Gastrocnemius medialis (tissue), 4 donors: ENCODE measurements at regions of chr1 and their contacts with region 1.

Region 1: DNA sequence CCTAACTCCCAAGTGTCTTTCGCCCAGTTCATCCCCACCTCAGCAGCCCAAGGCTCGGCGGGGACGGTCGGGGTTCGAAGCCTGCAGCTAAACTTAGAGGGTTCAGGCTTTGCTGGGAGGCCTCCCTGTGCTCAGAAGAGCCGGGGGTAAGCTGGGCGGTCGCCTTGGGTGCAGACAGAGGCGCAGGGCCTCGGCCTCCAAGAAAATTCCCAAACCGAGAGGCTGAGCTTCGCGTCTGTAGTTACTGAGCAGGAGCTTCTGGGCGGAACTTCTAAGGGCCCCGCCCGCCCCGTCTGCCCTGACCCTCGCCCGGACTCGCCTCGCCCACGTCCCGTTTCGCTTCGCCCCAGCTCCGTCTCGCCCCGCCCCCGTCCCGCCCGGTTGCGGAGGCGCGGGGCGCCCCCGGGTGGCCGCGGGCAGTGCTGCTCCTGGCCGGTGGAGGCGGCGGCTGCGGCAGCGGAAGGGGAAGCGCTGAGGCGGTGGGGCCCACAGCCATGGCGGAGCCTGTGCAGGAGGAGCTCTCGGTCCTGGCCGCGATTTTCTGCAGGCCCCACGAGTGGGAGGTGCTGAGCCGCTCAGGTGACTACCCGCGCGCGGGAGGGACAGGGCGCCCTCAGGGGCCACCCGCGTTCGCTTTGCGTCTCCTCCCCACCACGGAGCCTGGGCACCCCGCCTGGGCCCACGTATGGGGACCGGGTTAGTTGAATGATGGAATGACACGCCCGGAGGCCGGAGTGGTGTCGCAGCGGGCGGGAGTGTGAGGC is at the start of gene RWDD3:
- DNase-seq: peak; percentile 84 to 89
- ATAC-seq: peak; percentile 89 to 93
- H3K4me3 ChIP-seq: peak within 1 kb of the TSS; percentile 75 to 99 (median 93)
- H3K27ac ChIP-seq: peak within 1 kb of the TSS; percentile 75 to 91 (median 86)
- H3K4me1 ChIP-seq: peaks cover 22 to 42% of the 10 kb centered on the region in 2 donors
- H3K27me3 ChIP-seq: no peaks in the 10 kb centered on the region
- CTCF ChIP-seq: peak; percentile 74 to 96 (median 91)
- POLR2A ChIP-seq: peak; percentile 34 to 38
- total RNA-seq, gene RWDD3: 3.2 to 12.7 (median 6.6) TPM

Region 2: DNA sequence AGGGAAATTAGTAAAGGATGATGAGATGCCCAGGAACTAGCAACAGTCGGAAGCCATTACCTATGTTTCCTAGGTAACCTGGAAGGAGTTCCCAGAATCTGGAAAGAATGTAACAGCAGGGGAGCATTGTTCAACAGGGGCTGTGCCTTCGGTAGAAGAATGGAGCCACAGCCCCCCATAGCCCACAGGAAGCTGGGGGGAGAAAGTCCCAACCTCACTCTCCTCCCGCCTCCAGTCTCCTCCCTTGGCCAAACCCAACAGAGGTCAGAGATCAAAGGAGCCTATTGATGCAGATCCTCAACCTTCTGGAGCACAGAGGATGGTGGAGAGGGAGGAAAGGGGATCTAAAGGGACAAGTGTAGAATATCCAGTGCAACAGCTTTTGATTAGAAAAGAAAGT is 545.3 kb before region 1 on chr1:
- in situ Hi-C with region 1: no loop called
- intact Hi-C with region 1: no loop called
- DNase-seq: no peak
- ATAC-seq: no peak
- H3K4me3 ChIP-seq: no peak overlapping the region
- H3K27ac ChIP-seq: peak overlapping the region; percentile 51 to 67 (median 64)
- H3K4me1 ChIP-seq: peaks cover 0 to 6% of the 10 kb centered on the region in 2 donors
- H3K27me3 ChIP-seq: peaks cover 0 to 3% (median 0%) of the 10 kb centered on the region in 3 donors
- CTCF ChIP-seq: no peak
- POLR2A ChIP-seq: no peak

Region 3: DNA sequence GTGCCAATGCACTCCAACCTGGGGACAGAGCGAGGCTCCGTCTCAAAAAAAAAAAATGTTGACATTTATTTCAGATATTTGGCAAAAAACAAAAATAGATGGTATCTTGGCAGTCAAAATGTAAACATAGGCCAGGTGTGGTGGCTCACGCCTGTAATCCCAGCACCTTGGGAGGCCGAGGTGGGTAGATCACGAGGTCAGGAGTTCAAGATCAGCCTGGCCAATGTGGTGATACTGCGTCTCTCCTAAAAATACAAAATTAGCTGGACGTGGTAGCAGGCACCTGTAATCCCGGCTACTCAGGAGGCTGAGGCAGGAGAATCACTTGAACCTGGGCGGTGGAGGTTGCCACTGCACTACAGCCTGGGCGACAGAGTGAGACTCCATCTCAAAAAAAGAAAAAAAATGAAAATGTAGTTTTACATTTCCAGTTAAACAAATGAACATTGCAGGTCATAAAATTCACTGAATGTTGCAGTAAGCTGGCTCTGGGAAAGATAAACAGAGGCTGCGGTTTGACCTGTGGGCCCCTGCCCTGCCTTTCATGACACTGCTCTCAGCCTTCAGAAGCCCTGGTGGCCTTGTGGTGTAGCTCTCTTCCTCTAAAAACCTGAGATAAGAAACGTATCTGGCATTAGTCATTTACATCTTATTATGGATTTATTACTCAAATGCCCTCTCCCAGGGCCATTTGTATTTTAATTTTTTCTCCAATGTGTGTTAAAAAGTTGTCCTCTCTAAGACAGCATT is 426.0 kb before region 1 on chr1:
- in situ Hi-C with region 1: no loop called
- intact Hi-C with region 1: no loop called
- DNase-seq: no peak
- ATAC-seq: no peak
- H3K4me3 ChIP-seq: no peak overlapping the region
- H3K27ac ChIP-seq: no peak overlapping the region
- H3K4me1 ChIP-seq: no peaks in the 10 kb centered on the region
- H3K27me3 ChIP-seq: no peaks in the 10 kb centered on the region
- CTCF ChIP-seq: no peak
- POLR2A ChIP-seq: no peak

Region 4: GRCh38 chr1:94854458-94855306 is 379.2 kb before region 1 on chr1:
- in situ Hi-C with region 1: loop called in 3 of 4 experiments (anchors 25 kb)
- intact Hi-C with region 1: loop called (anchors 5 kb)
- DNase-seq: peak; percentile 66 to 76
- ATAC-seq: peak; percentile 93 to 97
- H3K4me3 ChIP-seq: peak overlapping the region; percentile 49 to 67 (median 52)
- H3K27ac ChIP-seq: peak overlapping the region; percentile 39 to 67 (median 47)
- H3K4me1 ChIP-seq: peaks cover 0 to 9% of the 10 kb centered on the region in 2 donors
- H3K27me3 ChIP-seq: no peaks in the 10 kb centered on the region
- CTCF ChIP-seq: peak; percentile 80 to 89 (median 82)
- POLR2A ChIP-seq: no peak

Region 5: DNA sequence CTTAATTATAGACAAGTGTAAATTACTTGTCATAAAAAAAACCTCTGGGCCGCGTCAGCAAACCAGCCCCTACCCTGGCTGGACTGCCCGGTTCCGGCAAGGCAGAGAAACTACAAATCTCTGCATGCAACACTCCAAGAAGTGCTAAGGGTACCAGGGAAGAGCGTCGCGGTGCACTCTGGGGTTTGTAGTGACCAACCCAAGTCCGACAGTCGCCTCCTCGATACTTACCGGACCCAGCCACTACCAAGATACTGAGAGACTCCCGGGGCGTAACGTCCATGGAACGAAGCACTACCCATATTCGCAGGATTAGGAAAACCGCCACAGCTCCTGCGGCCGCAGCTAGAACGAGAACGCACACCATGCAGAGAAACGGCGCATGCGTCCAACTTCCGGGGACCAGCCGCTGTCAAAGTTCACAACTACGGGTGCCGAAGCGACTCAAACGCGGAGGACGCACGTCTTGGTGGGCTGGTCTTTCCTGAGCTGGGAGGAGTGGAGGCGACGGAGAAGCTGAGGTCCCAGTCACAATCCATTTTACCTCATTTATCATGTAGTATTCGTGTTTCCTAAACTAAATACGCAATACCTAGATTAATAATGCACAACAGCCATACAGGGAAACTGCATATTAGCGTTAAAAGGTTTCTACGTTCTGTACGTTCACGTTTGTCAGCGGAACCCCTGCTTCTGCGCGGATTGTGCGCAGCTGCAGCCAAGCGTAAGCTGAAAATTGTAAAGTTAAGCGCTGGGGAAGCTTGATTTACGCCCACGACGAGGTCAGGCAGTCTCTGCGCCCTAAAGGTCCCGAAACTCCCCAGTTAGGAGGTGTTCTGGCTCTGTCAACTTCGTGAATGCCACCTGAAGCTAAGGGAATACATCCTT is 161.1 kb before region 1 on chr1 and contains the start of gene ALG14:
- in situ Hi-C with region 1: no loop called
- intact Hi-C with region 1: loop called (anchors 1 kb)
- DNase-seq: peak; percentile 91 to 92
- ATAC-seq: peak; percentile 99 to 100
- H3K4me3 ChIP-seq: peak within 1 kb of the TSS; percentile 73 to 83 (median 81)
- H3K27ac ChIP-seq: peak within 1 kb of the TSS; percentile 88 to 97 (median 91)
- H3K4me1 ChIP-seq: peaks cover 5 to 7% of the 10 kb centered on the region in 2 donors
- H3K27me3 ChIP-seq: no peaks in the 10 kb centered on the region
- CTCF ChIP-seq: no peak
- POLR2A ChIP-seq: peak; percentile 53 to 71
- total RNA-seq, gene ALG14: 0.24 to 0.97 (median 0.77) TPM

Region 6: DNA sequence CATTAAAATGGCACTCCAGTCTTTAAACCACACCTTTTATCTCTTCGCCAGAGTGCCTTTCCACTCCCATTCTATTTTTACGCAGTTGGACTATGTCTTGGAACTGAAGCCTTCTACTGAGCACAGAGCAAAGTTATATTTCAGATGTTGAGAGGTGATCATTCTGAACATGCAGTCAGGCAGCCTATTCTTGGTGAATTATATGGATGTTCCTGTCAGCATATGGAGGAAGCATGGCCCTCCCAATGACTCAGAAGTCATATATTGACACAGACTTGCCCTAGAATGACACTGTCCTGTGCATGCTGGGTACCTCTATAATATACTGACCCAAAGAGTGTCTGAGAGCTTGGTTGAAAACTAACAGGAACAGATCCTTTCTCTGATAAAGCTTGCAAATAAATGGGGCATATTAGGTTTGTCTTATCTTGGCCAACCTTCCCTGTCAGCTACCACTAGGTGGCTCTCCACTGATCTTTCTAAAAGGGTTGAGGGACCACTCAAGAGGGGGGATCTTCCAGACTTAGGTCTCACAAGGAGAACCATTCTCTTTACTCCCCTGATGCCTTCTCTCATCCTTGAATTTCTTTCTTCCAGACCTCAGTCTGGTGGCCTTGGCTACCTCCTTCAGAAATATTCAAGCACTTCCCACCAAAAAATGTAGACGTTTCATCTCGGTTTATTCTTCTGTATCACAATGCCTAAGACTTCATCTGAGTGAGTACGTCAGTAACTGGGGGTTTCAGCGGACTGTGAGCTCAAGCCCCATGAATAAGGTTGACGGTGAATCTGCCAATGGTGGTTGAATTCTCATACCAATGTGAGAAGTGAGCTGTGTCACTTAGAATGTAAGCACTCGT is 149.4 kb before region 1 on chr1:
- in situ Hi-C with region 1: loop called (anchors 5 to 10 kb)
- intact Hi-C with region 1: loop called (anchors 1 kb)
- DNase-seq: peak in 1 of 2 donors; percentile 18
- ATAC-seq: peak in 1 of 2 donors; percentile 63
- H3K4me3 ChIP-seq: no peak overlapping the region
- H3K27ac ChIP-seq: no peak overlapping the region
- H3K4me1 ChIP-seq: peaks cover 0 to 13% of the 10 kb centered on the region in 2 donors
- H3K27me3 ChIP-seq: no peaks in the 10 kb centered on the region
- CTCF ChIP-seq: peak; percentile 23 to 64 (median 57)
- POLR2A ChIP-seq: no peak

Region 7: DNA sequence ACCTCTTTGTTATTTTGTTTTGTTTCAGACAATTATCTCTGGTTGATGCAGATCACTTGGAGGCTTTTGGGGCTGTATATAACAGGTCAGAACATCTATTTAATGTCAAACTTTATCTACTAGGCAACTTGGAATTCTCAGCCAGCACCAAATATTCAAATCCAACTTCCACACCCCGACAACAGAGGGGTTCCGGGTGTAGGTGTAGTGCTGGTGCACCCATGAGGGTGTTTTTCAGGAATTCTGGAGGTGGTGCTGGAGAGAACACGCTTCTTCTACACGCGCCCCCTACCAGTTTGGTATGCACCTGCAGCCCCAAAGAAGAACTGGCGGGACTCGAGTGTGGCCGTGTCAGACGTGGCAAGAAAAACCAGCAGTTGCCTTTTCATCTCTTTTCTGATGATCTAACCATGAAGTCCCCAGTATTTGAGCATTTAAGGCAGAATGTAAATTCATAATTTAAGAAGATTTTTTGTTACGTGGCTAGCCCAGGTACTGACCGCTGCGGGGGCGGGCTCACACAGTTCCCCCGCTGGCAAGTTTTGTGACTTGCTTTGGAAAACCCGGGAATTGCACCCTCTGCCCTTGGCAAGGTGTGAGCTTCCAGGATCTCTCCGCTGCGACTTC is 117.2 kb before region 1 on chr1:
- in situ Hi-C with region 1: no loop called
- intact Hi-C with region 1: loop called (anchors 1 kb)
- DNase-seq: peak; percentile 6 to 34
- ATAC-seq: peak; percentile 62 to 72
- H3K4me3 ChIP-seq: peak overlapping the region; percentile 62 to 86 (median 69)
- H3K27ac ChIP-seq: peak overlapping the region; percentile 70 to 89 (median 84)
- H3K4me1 ChIP-seq: peaks cover 4 to 14% of the 10 kb centered on the region in 2 donors
- H3K27me3 ChIP-seq: no peaks in the 10 kb centered on the region
- CTCF ChIP-seq: peak; percentile 24 to 70 (median 44)
- POLR2A ChIP-seq: no peak

Region 8: GRCh38 chr1:95207223-95207935 is 26.5 kb before region 1 on chr1:
- in situ Hi-C with region 1: no loop called
- intact Hi-C with region 1: no loop called
- DNase-seq: no peak
- ATAC-seq: peak in 1 of 2 donors; percentile 68
- H3K4me3 ChIP-seq: no peak overlapping the region
- H3K27ac ChIP-seq: no peak overlapping the region
- H3K4me1 ChIP-seq: no peaks in the 10 kb centered on the region
- H3K27me3 ChIP-seq: no peaks in the 10 kb centered on the region
- CTCF ChIP-seq: no peak
- POLR2A ChIP-seq: no peak

Region 9: DNA sequence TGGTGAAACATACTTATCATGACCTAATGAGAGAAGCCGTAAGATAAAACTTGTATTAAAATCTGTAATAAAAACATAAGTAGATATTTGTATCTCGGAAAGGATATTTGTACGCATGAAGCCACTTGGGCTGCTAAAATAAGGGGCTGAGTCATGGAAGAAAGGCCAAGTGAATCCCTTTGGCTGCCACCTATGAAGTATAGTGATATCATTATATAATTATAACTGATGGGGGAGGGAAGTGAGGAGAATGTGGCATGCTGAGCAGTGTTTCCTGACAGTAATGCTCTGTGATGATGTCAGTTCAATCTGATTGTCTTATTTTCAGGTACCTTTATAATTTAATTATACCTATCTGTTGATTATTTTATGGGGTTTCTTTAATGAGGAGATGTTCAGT is 13.7 kb after region 1 on chr1:
- in situ Hi-C with region 1: no loop called
- intact Hi-C with region 1: loop called (anchors 1 kb)
- DNase-seq: peak; percentile 7 to 46
- ATAC-seq: peak; percentile 99 to 100
- H3K4me3 ChIP-seq: no peak overlapping the region
- H3K27ac ChIP-seq: peak overlapping the region; percentile 8 to 71 (median 66)
- H3K4me1 ChIP-seq: peaks cover 21 to 31% of the 10 kb centered on the region in 2 donors
- H3K27me3 ChIP-seq: no peaks in the 10 kb centered on the region
- CTCF ChIP-seq: no peak
- POLR2A ChIP-seq: no peak